Esophagus muscularis mucosa (tissue), 4 donors: ENCODE measurements at regions of chr7 and their contacts with region 1.

Region 1: DNA sequence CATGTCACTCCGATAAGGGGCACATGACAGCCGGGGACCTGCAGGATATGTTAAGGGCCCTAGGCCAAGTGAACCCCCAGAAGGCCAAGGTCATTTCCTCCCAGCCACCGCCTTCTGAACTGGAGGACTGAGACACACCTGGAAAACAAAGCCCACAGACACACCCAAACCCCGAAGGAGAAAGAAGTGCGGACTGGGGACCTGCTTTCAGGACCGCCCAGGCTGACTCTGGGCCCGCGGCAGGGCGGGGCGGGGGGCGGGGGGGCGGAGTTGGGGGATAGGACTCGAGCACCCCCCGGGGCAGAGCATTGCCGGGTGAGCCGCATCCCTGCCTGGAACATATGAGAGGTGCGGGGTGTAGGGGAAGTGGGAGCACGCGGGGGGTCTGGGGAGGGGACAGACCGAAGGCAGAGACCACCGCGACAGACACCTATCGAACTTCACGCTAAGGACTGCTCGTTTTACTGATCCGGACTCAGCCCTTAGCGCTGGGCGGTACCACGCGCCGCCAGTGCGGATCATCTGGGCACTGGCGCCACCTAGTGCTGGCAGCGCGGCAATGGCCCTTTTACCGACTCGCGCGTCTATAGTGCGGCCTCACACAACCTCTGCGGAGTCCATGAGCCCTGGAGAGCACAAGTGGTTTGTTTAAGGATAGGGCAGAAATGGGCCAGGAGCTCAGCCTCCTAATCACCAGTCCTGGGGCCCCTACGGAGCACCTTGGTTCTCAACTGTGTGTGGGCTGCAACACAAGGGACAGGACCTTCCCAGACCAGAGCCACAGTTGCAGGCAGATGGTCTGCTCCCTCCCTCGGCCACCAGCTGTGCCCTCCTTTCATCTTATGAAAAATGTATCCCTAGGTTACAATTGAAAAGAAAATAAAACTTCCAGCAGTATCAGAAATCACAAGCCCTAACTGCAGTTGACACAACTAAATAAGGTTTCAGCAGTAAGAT is 157.6 kb downstream of the HERPUD2 start:
- DNase-seq: no peak
- H3K4me3 ChIP-seq: peak overlapping the region; percentile 44 to 62 (median 52)
- H3K27ac ChIP-seq: no peak overlapping the region
- H3K4me1 ChIP-seq: peaks cover 5 to 10% (median 7%) of the 10 kb centered on the region in 4 donors
- H3K27me3 ChIP-seq: peaks cover 0 to 16% (median 0%) of the 10 kb centered on the region in 4 donors
- CTCF ChIP-seq: peak in 2 of 3 experiments; percentile 83 to 88
- EP300 ChIP-seq: no peak
- POLR2A ChIP-seq: no peak

Region 2: GRCh38 chr7:34823640-34824258 is 713.6 kb before region 1 on chr7:
- intact Hi-C with region 1: loop called (anchors 5 kb)
- DNase-seq: no peak
- H3K4me3 ChIP-seq: no peak overlapping the region
- H3K27ac ChIP-seq: no peak overlapping the region
- H3K4me1 ChIP-seq: no peaks in the 10 kb centered on the region
- H3K27me3 ChIP-seq: no peaks in the 10 kb centered on the region
- CTCF ChIP-seq: peak; percentile 73 to 87 (median 77)
- EP300 ChIP-seq: no peak
- POLR2A ChIP-seq: no peak

Region 3: GRCh38 chr7:35185907-35186731 is 351.2 kb before region 1 on chr7:
- intact Hi-C with region 1: loop called (anchors 5 kb)
- DNase-seq: no peak
- H3K4me3 ChIP-seq: peak overlapping the region; percentile 39 to 50 (median 44)
- H3K27ac ChIP-seq: no peak overlapping the region
- H3K4me1 ChIP-seq: peaks cover 0 to 17% (median 16%) of the 10 kb centered on the region in 4 donors
- H3K27me3 ChIP-seq: peaks cover 0 to 27% (median 6%) of the 10 kb centered on the region in 4 donors
- CTCF ChIP-seq: no peak
- EP300 ChIP-seq: no peak
- POLR2A ChIP-seq: no peak